CD8-positive, alpha-beta T cell (primary cell): ENCODE measurements at regions of chr6 and their contacts with region 1.

Region 1: DNA sequence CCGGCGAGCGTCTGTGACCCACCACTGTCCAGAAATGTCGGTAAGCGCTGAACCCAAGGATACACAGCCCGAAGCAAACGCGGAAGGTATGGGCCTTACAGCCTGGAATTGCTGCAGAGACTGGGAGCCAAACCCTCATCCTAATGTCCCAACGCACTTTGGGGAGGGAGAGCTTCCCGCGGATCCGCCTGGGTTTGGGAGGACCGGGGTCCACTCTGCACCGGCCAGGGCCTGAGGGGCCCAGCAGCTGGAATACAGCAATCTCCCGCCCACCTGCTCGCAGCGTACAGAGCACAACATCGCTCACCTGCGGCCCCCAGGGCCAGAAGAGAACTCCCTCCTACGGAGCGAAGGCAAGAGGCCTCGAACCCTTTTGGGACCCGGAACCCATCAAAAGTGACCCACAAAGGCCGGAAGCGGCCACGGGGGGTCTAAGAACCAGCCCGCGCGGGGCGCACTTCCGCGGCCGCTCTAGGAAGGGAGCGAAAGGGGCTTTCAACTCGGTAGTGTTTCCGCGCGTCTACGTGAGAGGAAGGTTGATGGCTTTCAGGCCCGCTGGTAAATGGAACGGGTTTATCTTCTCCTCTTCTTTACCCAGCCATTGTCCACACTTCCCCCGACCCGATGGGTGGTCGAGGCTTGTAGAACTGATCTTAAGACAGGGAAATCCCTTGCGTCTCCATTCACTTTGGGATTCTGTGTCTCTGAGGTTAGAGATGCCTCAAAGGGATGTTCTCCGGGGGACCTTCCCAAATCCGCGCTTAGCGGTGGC is at the start of gene ZSCAN12:
- DNase-seq: peak; percentile 76 to 92 (median 86)
- ATAC-seq: peak; percentile 96
- H3K4me3 ChIP-seq: peak within 1 kb of the TSS; percentile 87 to 96
- H3K4me3 Mint-ChIP-seq: peak within 1 kb of the TSS; percentile 93
- H3K27ac ChIP-seq: peak within 1 kb of the TSS; percentile 73 to 85
- H3K27ac Mint-ChIP-seq: peak within 1 kb of the TSS; percentile 97
- H3K4me1 ChIP-seq: peaks cover 32% of the 10 kb centered on the region
- H3K4me1 Mint-ChIP-seq: peaks cover 47% of the 10 kb centered on the region
- H3K27me3 ChIP-seq: no peaks in the 10 kb centered on the region
- H3K27me3 Mint-ChIP-seq: peaks cover 34% of the 10 kb centered on the region
- CTCF ChIP-seq: no peak
- total RNA-seq, gene ZSCAN12: 2.8 to 3.0 TPM

Region 2: GRCh38 chr6:28080631-28081485 is 318.7 kb before region 1 on chr6:
- CTCF ChIA-PET with region 1: no interaction called
- POLR2A ChIA-PET with region 1: no interaction called
- intact Hi-C with region 1: loop called in 1 of 2 experiments (anchors 1 kb)
- DNase-seq: peak; percentile 86 to 96 (median 94)
- ATAC-seq: peak; percentile 74
- H3K4me3 ChIP-seq: peak overlapping the region; percentile 69 to 93
- H3K4me3 Mint-ChIP-seq: peak overlapping the region; percentile 98
- H3K27ac ChIP-seq: peak overlapping the region; percentile 91 to 96
- H3K27ac Mint-ChIP-seq: peak overlapping the region; percentile 99
- H3K4me1 ChIP-seq: peaks cover 13% of the 10 kb centered on the region
- H3K4me1 Mint-ChIP-seq: peaks cover 21% of the 10 kb centered on the region
- H3K27me3 ChIP-seq: no peaks in the 10 kb centered on the region
- H3K27me3 Mint-ChIP-seq: no peaks in the 10 kb centered on the region
- CTCF ChIP-seq: no peak

Region 3: GRCh38 chr6:28136585-28137504 is 262.7 kb before region 1 on chr6:
- CTCF ChIA-PET with region 1: no interaction called
- POLR2A ChIA-PET with region 1: interaction called, 3 read pairs
- intact Hi-C with region 1: loop called (anchors 1 to 5 kb)
- DNase-seq: peak; percentile 52 to 91 (median 77)
- ATAC-seq: peak; percentile 35
- H3K4me3 ChIP-seq: peak overlapping the region; percentile 79 to 88
- H3K4me3 Mint-ChIP-seq: peak overlapping the region; percentile 94
- H3K27ac ChIP-seq: peak overlapping the region; percentile 87 to 92
- H3K27ac Mint-ChIP-seq: peak overlapping the region; percentile 99
- H3K4me1 ChIP-seq: peaks cover 28% of the 10 kb centered on the region
- H3K4me1 Mint-ChIP-seq: peaks cover 71% of the 10 kb centered on the region
- H3K27me3 ChIP-seq: no peaks in the 10 kb centered on the region
- H3K27me3 Mint-ChIP-seq: no peaks in the 10 kb centered on the region
- CTCF ChIP-seq: no peak

Region 4: DNA sequence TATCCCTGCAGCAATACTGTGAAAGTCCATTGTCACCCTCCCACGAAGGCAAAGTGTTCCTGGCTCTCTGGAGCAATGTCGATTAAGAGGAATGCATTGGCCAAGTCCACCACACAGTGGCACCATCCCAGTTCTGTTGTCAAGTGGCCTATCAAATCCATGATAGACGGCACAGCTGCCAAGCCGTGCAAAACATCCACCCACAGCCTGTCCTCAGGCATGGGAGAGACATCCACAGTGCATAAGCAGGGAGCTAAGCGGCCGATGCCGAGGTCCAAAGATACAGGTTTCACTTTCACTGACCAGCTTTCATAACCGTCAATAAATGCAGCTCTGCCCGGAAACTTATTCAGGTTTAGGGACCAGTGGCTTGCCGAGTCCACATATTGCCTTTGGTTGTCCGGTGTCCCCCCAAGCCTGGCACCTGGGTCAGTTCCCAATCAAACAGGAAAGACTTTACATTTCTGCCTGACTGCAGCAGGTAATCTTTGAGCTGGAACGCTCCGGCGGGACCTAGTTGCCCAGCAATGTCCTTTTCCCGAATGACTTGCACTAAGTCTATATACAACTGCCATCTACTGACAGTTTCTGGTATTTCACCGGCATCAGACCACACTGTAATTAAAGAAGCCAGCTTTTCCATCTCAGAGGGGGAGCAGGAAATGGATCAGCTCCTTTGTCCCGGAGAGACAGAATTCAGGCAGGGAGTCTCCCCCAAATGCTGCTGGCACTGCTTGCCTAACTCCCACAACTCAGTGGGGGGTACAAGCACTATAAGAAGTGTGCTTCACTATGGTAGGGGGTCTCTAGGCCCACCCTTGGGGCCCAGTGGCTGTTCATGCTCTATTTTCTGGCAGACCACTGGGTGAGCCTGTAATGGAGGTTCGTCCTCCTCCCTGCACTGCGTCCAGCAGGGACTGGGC is 43.5 kb before region 1 on chr6:
- CTCF ChIA-PET with region 1: interaction called, 4 read pairs
- POLR2A ChIA-PET with region 1: no interaction called
- intact Hi-C with region 1: loop called in 1 of 2 experiments (anchors 1 kb)
- DNase-seq: peak in 8 of 9 experiments; percentile 32 to 85 (median 62)
- ATAC-seq: peak; percentile 91
- H3K4me3 ChIP-seq: peak overlapping the region; percentile 39 to 65
- H3K4me3 Mint-ChIP-seq: peak overlapping the region; percentile 90
- H3K27ac ChIP-seq: peak overlapping the region in 1 of 2 experiments; percentile 27
- H3K27ac Mint-ChIP-seq: peak overlapping the region; percentile 52
- H3K4me1 ChIP-seq: peaks cover 17% of the 10 kb centered on the region
- H3K4me1 Mint-ChIP-seq: peaks cover 33% of the 10 kb centered on the region
- H3K27me3 ChIP-seq: no peaks in the 10 kb centered on the region
- H3K27me3 Mint-ChIP-seq: no peaks in the 10 kb centered on the region
- CTCF ChIP-seq: peak; percentile 83

Region 5: GRCh38 chr6:28542440-28543296 is 143.1 kb after region 1 on chr6:
- CTCF ChIA-PET with region 1: no interaction called
- POLR2A ChIA-PET with region 1: no interaction called
- intact Hi-C with region 1: loop called (anchors 2 to 5 kb)
- DNase-seq: peak in 8 of 9 experiments; percentile 33 to 71 (median 48)
- ATAC-seq: peak; percentile 38
- H3K4me3 ChIP-seq: peak overlapping the region; percentile 45 to 53
- H3K4me3 Mint-ChIP-seq: peak overlapping the region; percentile 82
- H3K27ac ChIP-seq: no peak overlapping the region
- H3K27ac Mint-ChIP-seq: peak overlapping the region; percentile 4
- H3K4me1 ChIP-seq: peaks cover 4% of the 10 kb centered on the region
- H3K4me1 Mint-ChIP-seq: peaks cover 21% of the 10 kb centered on the region
- H3K27me3 ChIP-seq: peaks cover 0 to 3% of the 10 kb centered on the region in 2 experiments
- H3K27me3 Mint-ChIP-seq: peaks cover 59% of the 10 kb centered on the region
- CTCF ChIP-seq: no peak

Region 6: DNA sequence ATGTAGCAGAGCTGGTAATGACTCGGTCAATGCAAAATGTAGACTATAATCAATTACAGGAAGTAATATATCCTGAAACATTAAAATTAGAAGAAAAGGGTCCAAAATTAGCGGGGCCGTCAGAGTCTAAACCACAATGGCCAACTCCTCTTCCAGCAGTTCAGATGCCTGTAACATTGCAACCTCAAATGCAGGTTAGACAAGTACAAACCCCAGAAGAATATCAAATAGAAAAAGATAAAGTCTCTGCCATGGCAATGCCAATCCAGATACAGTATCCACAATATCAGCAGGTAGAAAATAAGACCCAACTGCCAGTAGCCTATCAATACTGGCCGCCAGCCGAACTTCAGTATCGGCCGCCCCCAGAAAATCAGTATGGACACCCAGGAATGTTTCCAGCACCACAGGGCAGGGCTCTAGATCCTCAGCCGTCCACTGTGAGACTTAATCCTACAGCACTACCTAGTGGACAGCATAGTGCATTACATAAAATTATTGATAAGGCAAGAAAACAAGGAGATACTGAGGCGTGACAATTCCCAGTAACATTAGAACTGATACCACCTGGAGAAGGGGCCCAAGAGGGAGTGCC is 284.5 kb after region 1 on chr6:
- CTCF ChIA-PET with region 1: no interaction called
- POLR2A ChIA-PET with region 1: no interaction called
- intact Hi-C with region 1: loop called in 1 of 2 experiments (anchors 5 kb)
- DNase-seq: peak in 3 of 9 experiments; percentile 2 to 60 (median 43)
- ATAC-seq: peak; percentile 80
- H3K4me3 ChIP-seq: no peak overlapping the region
- H3K4me3 Mint-ChIP-seq: no peak overlapping the region
- H3K27ac ChIP-seq: no peak overlapping the region
- H3K27ac Mint-ChIP-seq: no peak overlapping the region
- H3K4me1 ChIP-seq: no peaks in the 10 kb centered on the region
- H3K4me1 Mint-ChIP-seq: peaks cover 8% of the 10 kb centered on the region
- H3K27me3 ChIP-seq: peaks cover 7 to 14% of the 10 kb centered on the region in 2 experiments
- H3K27me3 Mint-ChIP-seq: peaks cover 80% of the 10 kb centered on the region
- CTCF ChIP-seq: peak; percentile 62

Region 7: GRCh38 chr6:28940858-28941680 is 541.5 kb after region 1 on chr6:
- CTCF ChIA-PET with region 1: no interaction called
- POLR2A ChIA-PET with region 1: no interaction called
- intact Hi-C with region 1: no loop called
- DNase-seq: peak in 8 of 9 experiments; percentile 58 to 92 (median 70)
- ATAC-seq: peak; percentile 70
- H3K4me3 ChIP-seq: peak overlapping the region; percentile 66 to 81
- H3K4me3 Mint-ChIP-seq: peak overlapping the region; percentile 91
- H3K27ac ChIP-seq: peak overlapping the region; percentile 70 to 79
- H3K27ac Mint-ChIP-seq: peak overlapping the region; percentile 96
- H3K4me1 ChIP-seq: peaks cover 40% of the 10 kb centered on the region
- H3K4me1 Mint-ChIP-seq: peaks cover 46% of the 10 kb centered on the region
- H3K27me3 ChIP-seq: no peaks in the 10 kb centered on the region
- H3K27me3 Mint-ChIP-seq: no peaks in the 10 kb centered on the region
- CTCF ChIP-seq: no peak